ENCODE measurements at regions of chr7 and their contacts with region 1.

Region 1: GRCh38 chr7:100852048-100852872 is at the start of gene SLC12A9:
- DNase-seq: peak; percentile 96
- H3K4me3 ChIP-seq: peak within 1 kb of the TSS; percentile 75 to 84 (median 78)
- H3K27ac ChIP-seq: peak within 1 kb of the TSS; percentile 76 to 89 (median 82)
- H3K4me1 ChIP-seq: peaks cover 8 to 26% (median 25%) of the 10 kb centered on the region in 4 donors
- H3K27me3 ChIP-seq: no peaks in the 10 kb centered on the region
- CTCF ChIP-seq: peak; percentile 92 to 94 (median 93)
- EP300 ChIP-seq: no peak
- POLR2A ChIP-seq: no peak
- total RNA-seq, gene SLC12A9: 15.0 to 26.0 (median 19.9) TPM

Region 2: GRCh38 chr7:100590077-100590737 is 262.1 kb before region 1 on chr7:
- intact Hi-C with region 1: no loop called
- DNase-seq: no peak
- H3K4me3 ChIP-seq: peak overlapping the region in 3 of 4 donors; percentile 9 to 27 (median 25)
- H3K27ac ChIP-seq: peak overlapping the region; percentile 15 to 60 (median 36)
- H3K4me1 ChIP-seq: peaks cover 9 to 28% (median 15%) of the 10 kb centered on the region in 4 donors
- H3K27me3 ChIP-seq: peaks cover 0 to 19% (median 0%) of the 10 kb centered on the region in 4 donors
- CTCF ChIP-seq: no peak
- EP300 ChIP-seq: no peak
- POLR2A ChIP-seq: no peak

Region 3: DNA sequence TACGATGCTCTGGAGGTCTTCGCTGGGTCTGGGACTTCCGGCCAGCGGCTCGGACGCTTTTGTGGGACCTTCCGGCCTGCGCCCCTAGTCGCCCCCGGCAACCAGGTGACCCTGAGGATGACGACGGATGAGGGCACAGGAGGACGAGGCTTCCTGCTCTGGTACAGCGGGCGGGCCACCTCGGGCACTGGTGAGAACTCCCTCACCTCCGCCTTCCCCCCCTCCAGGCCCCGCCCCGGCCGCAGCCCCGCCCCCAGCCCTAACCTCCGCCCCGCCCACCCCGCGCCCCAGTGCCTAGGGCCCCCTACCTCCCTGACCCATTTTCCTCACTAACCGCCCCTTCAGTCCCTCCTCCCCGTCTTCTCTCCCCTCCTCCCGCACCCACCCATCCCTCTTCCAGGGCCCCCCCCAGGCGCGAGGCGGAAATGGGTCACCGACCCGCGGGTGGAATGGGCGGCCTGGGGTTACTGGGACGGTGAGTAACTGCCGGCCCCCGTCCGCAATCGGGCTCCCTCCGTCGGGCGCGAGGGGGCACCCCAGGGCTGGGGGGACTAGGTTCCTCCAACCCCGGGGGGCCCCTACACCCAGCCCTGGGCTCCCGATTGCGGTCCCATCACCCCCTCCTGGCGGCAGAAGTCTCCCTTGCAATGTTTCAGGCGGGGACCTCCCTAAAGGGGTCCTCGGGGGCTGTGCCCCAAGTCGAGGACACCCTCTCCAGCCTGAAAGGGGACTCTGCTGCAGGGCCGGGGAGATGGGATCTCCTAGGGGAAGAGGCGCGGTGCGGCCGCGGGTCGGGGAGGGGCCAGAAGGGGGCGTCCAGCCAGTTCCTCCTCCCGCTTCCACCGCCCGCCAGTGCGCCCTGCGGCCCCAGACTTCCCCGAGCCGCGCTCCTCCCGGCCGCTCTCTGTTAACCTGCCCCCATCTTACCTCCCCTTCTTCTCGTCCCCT is 248.0 kb before region 1 on chr7:
- intact Hi-C with region 1: loop called (anchors 10 kb)
- DNase-seq: no peak
- H3K4me3 ChIP-seq: peak overlapping the region; percentile 66 to 90 (median 74)
- H3K27ac ChIP-seq: peak overlapping the region; percentile 84 to 89 (median 86)
- H3K4me1 ChIP-seq: peaks cover 20 to 48% (median 43%) of the 10 kb centered on the region in 4 donors
- H3K27me3 ChIP-seq: no peaks in the 10 kb centered on the region
- CTCF ChIP-seq: peak; percentile 27 to 45 (median 39)
- EP300 ChIP-seq: no peak
- POLR2A ChIP-seq: peak; percentile 45

Region 4: GRCh38 chr7:100705753-100706671 is 146.2 kb before region 1 on chr7 and contains the start of gene POP7:
- intact Hi-C with region 1: loop called (anchors 5 kb)
- DNase-seq: peak; percentile 99
- H3K4me3 ChIP-seq: peak within 1 kb of the TSS; percentile 70 to 88 (median 75)
- H3K27ac ChIP-seq: peak within 1 kb of the TSS; percentile 86 to 96 (median 92)
- H3K4me1 ChIP-seq: peaks cover 16 to 26% (median 23%) of the 10 kb centered on the region in 4 donors
- H3K27me3 ChIP-seq: no peaks in the 10 kb centered on the region
- CTCF ChIP-seq: no peak
- EP300 ChIP-seq: no peak
- POLR2A ChIP-seq: peak; percentile 10
- total RNA-seq, gene POP7: 27.0 to 51.3 (median 43.7) TPM

Region 5: GRCh38 chr7:100779359-100779758 is 72.9 kb before region 1 on chr7:
- intact Hi-C with region 1: no loop called
- DNase-seq: no peak
- H3K4me3 ChIP-seq: no peak overlapping the region
- H3K27ac ChIP-seq: no peak overlapping the region
- H3K4me1 ChIP-seq: no peaks in the 10 kb centered on the region
- H3K27me3 ChIP-seq: peaks cover 0 to 56% (median 0%) of the 10 kb centered on the region in 4 donors
- CTCF ChIP-seq: no peak
- EP300 ChIP-seq: no peak
- POLR2A ChIP-seq: no peak

Region 6: GRCh38 chr7:100799014-100799896 is 53.0 kb before region 1 on chr7:
- intact Hi-C with region 1: loop called (anchors 1 kb)
- DNase-seq: peak; percentile 93
- H3K4me3 ChIP-seq: no peak overlapping the region
- H3K27ac ChIP-seq: no peak overlapping the region
- H3K4me1 ChIP-seq: peaks cover 26 to 49% (median 40%) of the 10 kb centered on the region in 4 donors
- H3K27me3 ChIP-seq: peaks cover 0 to 10% (median 0%) of the 10 kb centered on the region in 4 donors
- CTCF ChIP-seq: peak; percentile 65 to 82 (median 82)
- EP300 ChIP-seq: no peak
- POLR2A ChIP-seq: no peak

Region 7: DNA sequence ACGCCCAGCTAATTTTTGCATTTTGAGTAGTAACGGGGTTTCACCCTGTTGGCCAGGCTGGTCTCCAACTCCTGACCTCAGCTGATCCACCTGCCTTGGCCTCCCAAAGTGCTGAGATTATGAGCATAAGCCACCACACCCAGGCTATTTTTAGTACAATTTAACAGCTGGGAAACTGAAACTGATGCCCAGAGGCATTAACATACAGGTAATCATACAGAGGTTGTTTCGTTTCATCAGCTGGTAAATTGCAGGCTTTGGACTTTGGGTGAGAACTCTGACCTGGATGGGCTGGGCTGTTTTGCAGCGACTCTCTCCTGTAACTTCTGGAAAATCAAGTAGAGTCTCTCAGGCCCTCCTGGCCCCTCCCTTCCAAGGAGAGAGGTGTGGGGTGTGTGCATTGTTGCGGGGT is 49.7 kb after region 1 on chr7:
- intact Hi-C with region 1: no loop called
- DNase-seq: no peak
- H3K4me3 ChIP-seq: no peak overlapping the region
- H3K27ac ChIP-seq: no peak overlapping the region
- H3K4me1 ChIP-seq: peaks cover 3 to 6% (median 6%) of the 10 kb centered on the region in 4 donors
- H3K27me3 ChIP-seq: peaks cover 0 to 67% (median 8%) of the 10 kb centered on the region in 4 donors
- CTCF ChIP-seq: no peak
- EP300 ChIP-seq: no peak
- POLR2A ChIP-seq: no peak